ENCODE measurements at regions of chr1 and their contacts with region 1.

Region 1: DNA sequence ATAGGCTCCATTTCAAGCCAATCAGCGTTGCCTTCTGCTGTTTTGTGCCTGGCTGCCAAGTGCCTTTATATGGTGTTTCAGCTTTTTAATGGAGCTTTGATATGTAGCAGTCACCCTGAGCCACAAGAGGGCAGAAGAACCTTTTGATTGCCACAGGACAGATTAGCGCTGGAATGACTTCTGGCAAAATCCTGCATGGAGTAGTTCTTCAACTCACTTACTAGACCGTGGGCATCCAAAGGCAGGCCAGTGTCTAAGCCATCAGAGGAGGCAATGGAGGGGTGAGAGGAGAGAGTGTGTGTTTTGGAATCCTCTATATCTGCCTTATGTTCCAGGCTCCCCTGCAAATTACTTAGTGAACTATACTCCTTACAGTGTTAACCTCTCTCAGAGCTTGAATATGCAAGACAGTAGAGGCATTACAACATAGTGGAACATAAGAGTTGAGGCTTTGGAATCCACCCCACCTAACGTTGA is 56.2 kb downstream of the ST3GAL3 start:
- DNase-seq: peak; percentile 67
- H3K4me3 Mint-ChIP-seq: no peak overlapping the region
- H3K27ac Mint-ChIP-seq: no peak overlapping the region
- H3K4me1 Mint-ChIP-seq: no peaks in the 10 kb centered on the region
- H3K27me3 Mint-ChIP-seq: no peaks in the 10 kb centered on the region

Region 2: GRCh38 chr1:43602990-43603389 is 160.5 kb before region 1 on chr1:
- CTCF ChIA-PET with region 1: no interaction called
- DNase-seq: no peak
- H3K4me3 Mint-ChIP-seq: no peak overlapping the region
- H3K27ac Mint-ChIP-seq: no peak overlapping the region
- H3K4me1 Mint-ChIP-seq: no peaks in the 10 kb centered on the region
- H3K27me3 Mint-ChIP-seq: peaks cover 4% of the 10 kb centered on the region

Region 3: DNA sequence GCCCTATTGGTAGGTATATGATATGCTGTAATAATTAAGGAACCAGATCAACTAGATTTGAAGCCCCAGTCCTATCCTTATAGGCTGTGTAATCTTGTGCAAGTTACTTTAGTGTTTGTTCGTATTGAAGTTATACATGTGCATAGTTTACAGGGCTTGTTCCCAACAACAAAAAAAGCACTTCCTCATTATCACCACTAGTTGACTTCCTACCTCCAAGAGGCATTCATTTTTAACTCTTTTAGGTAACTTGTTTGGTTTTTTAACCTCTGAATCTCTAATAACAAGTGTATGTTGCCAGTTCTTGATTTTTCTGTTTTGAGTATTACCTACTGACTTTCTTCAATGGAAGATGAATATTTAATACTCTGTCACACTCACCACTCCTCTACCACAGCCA is 15.7 kb after region 1 on chr1:
- CTCF ChIA-PET with region 1: interaction called, 10 read pairs
- DNase-seq: no peak
- H3K4me3 Mint-ChIP-seq: no peak overlapping the region
- H3K27ac Mint-ChIP-seq: peak overlapping the region; percentile 73
- H3K4me1 Mint-ChIP-seq: peaks cover 28% of the 10 kb centered on the region
- H3K27me3 Mint-ChIP-seq: no peaks in the 10 kb centered on the region

Region 4: DNA sequence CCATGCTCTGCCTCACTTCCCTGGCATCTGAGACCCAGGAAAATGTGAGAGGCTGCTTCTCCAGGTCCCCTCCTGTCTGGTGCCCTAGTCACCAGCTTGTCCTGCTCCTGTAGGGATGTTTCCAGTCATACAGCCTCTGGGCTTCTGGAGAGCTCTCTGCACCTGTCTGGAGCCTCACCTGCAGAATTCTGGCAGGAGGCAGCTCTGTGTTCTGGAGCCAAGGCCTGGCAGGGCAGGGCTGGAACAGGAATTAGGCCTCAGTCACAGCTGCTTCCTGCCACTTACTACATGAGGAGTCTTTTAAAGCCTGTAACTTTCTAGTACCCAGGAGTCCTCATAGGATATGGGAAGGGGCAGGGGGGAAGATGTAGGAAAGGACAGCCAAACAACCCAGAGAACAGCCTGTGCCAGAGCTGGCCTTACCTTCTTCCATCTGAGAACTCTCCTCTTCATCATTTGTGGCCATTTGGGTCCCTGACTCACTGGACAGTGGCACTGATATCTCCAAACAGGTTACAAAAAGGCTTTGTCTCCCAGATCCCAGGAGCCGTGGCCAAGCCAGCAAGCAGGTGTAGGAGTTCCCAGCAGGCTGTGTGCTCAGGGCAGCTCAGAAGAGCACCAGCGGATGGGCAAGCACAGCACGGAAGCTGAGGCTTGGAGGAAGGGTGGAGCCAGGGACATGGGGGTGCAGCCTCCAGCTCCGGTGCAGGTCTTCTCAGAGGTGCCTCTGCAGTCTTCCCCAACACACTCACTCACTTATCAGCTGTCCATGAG is 138.7 kb after region 1 on chr1:
- CTCF ChIA-PET with region 1: interaction called, 12 read pairs
- DNase-seq: no peak
- H3K4me3 Mint-ChIP-seq: no peak overlapping the region
- H3K27ac Mint-ChIP-seq: no peak overlapping the region
- H3K4me1 Mint-ChIP-seq: no peaks in the 10 kb centered on the region
- H3K27me3 Mint-ChIP-seq: no peaks in the 10 kb centered on the region

Region 5: DNA sequence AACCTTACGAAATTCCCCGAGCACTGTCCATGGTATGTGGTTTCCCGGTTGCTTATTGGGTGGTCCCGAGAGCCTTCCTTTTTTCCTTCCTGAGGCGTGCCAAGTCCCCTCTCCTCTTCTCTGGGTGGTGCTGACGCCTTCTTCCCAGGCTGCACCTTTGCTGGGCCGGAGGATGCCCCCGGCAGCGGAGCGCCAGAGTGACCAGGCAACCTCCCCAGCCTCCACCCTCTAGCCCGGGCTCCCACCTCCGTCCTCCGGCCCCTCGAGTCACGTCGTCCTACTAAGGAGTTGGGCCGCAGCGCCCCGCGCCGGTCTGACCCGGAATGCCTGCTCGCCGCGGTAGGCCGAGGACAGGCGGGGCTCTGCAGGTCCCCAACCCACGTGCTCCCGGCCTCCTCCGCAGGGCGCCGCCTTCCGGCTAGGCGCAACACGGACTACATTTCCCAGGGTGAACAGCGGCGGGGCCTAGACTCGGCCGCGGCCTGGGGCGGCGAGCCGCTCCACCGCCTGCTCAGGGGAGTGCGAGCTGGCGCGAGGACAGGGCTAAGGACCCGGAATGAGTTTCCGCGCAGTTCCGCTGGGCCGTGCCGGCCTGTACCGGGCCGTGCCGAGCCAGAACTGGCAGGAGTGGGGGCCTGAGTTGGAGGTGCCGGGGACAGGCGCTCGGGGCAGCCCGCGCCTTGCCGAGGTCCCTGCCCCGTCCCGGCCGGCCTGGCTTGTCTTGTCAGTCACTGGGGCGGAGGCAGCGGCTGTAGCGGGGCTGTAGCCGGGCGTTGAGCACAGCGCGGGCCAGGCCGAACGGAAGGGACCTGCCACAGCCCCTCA is 182.9 kb after region 1 on chr1 and contains the start of gene IPO13:
- CTCF ChIA-PET with region 1: interaction called, 43 read pairs
- DNase-seq: peak; percentile 96
- H3K4me3 Mint-ChIP-seq: peak within 1 kb of the TSS; percentile 92
- H3K27ac Mint-ChIP-seq: peak within 1 kb of the TSS; percentile 91
- H3K4me1 Mint-ChIP-seq: peaks cover 48% of the 10 kb centered on the region
- H3K27me3 Mint-ChIP-seq: no peaks in the 10 kb centered on the region

Region 6: DNA sequence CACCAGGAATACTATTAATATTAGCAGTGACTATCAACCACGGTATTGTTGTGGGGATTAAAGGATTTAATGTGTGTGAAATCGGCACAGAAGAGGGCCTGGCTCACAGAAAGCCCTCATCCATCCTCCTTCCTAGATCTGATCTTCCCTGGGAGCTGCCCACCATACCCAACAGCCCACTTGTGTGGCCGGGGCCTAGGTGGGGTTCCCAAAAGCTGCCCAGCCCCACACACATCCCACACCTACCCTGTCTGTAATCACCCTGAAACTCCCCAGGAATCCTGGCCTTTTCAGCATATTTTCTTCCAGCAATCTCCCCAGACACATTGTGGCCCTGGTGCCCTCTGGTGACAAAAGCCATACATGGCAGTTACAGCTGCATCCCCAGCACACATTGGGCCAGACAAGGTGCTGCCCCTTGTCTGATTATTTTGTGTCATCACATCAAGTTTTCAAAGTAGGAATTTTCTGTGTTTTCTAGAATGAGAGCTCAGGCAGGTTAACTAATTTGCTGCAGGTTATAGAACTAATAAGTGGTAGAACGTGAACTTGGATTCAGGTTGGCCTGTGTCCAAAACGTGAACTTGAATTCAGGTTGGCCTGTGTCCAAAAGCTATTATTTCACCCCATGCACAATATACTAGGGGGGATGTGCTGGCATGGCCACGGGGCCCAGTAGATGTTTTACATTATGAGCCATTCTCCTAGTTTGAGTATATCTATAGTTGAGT is 273.0 kb after region 1 on chr1:
- CTCF ChIA-PET with region 1: interaction called, 14 read pairs
- DNase-seq: peak; percentile 79
- H3K4me3 Mint-ChIP-seq: no peak overlapping the region
- H3K27ac Mint-ChIP-seq: no peak overlapping the region
- H3K4me1 Mint-ChIP-seq: peaks cover 12% of the 10 kb centered on the region
- H3K27me3 Mint-ChIP-seq: peaks cover 15% of the 10 kb centered on the region

Region 7: DNA sequence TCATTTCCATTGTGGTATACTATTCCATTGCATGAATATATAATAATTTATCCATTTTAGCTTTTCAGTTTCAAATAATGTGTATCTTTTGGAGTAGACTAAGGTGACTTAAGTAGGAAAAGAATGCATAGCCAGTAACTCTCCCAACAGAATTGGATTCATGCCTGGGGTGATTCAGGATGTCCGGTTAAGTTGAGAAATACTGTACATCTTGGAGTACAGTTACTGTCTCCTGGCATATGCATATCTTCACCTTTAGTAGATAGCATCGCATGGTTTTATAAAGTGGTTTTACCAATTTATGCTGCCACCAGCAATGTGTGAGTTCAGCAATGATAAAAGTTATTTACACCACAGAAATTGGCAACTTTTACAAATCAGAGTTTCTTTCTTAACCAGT is 286.3 kb after region 1 on chr1:
- CTCF ChIA-PET with region 1: interaction called, 15 read pairs
- DNase-seq: no peak
- H3K4me3 Mint-ChIP-seq: no peak overlapping the region
- H3K27ac Mint-ChIP-seq: no peak overlapping the region
- H3K4me1 Mint-ChIP-seq: peaks cover 14% of the 10 kb centered on the region
- H3K27me3 Mint-ChIP-seq: peaks cover 14% of the 10 kb centered on the region